CD8-positive, alpha-beta T cell (primary cell): ENCODE measurements at regions of chr22 and their contacts with region 1.

Region 1: DNA sequence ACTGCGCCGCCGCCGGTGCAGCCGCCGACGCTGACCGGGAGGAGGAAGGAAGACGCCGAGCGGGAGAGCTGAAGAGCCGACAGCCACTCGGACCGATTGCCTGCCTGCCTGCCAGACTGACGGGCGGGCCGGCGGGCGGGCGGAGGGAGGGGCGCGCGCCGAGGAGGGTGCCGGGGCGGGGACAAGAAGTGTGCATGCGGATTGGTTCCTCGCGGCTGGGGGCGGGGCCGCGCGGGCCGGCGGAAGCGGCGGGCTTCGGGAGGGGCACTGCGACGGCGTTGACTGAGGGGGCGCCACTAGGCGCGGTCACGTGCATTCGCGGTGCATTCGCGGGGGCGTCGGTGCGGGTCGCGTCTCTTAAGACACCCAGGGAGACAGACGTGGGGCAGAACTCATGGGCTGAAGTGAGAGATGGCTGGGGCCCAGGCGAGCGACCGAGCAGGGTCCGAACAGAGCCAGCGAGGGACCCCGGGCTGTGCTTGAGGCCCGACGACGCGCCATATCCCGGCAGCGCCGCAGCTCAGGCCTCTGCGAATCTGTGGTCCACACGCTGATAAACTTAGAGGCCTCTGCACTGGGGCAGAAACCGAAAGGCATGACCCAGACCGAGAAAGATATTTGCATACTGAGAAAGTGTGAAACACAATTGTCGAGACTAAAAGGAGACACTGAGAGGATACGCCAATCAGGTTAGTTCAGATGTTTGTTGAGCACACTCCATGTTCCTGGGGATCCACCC is at the start of gene MAPK1:
- DNase-seq: peak; percentile 87 to 97 (median 94)
- ATAC-seq: peak; percentile 96
- H3K4me3 ChIP-seq: peak within 1 kb of the TSS; percentile 92 to 93
- H3K4me3 Mint-ChIP-seq: peak within 1 kb of the TSS; percentile 97
- H3K27ac ChIP-seq: peak within 1 kb of the TSS; percentile 86 to 96
- H3K27ac Mint-ChIP-seq: peak within 1 kb of the TSS; percentile 97
- H3K4me1 ChIP-seq: peaks cover 38% of the 10 kb centered on the region
- H3K4me1 Mint-ChIP-seq: peaks cover 51% of the 10 kb centered on the region
- H3K27me3 ChIP-seq: no peaks in the 10 kb centered on the region
- H3K27me3 Mint-ChIP-seq: no peaks in the 10 kb centered on the region
- CTCF ChIP-seq: peak; percentile 47
- total RNA-seq, gene MAPK1: 34.0 to 39.2 TPM

Region 2: GRCh38 chr22:21629262-21630149 is 238.2 kb before region 1 on chr22 and contains the start of gene YDJC:
- CTCF ChIA-PET with region 1: no interaction called
- POLR2A ChIA-PET with region 1: no interaction called
- intact Hi-C with region 1: loop called (anchors 1 to 2 kb)
- DNase-seq: peak; percentile 91 to 97 (median 95)
- ATAC-seq: peak; percentile 84
- H3K4me3 ChIP-seq: peak within 1 kb of the TSS; percentile 92 to 99
- H3K4me3 Mint-ChIP-seq: peak within 1 kb of the TSS; percentile 93
- H3K27ac ChIP-seq: peak within 1 kb of the TSS; percentile 89 to 91
- H3K27ac Mint-ChIP-seq: peak within 1 kb of the TSS; percentile 90
- H3K4me1 ChIP-seq: peaks cover 42% of the 10 kb centered on the region
- H3K4me1 Mint-ChIP-seq: peaks cover 37% of the 10 kb centered on the region
- H3K27me3 ChIP-seq: no peaks in the 10 kb centered on the region
- H3K27me3 Mint-ChIP-seq: no peaks in the 10 kb centered on the region
- CTCF ChIP-seq: peak; percentile 95
- total RNA-seq, gene YDJC: 25.6 to 26.0 TPM

Region 3: DNA sequence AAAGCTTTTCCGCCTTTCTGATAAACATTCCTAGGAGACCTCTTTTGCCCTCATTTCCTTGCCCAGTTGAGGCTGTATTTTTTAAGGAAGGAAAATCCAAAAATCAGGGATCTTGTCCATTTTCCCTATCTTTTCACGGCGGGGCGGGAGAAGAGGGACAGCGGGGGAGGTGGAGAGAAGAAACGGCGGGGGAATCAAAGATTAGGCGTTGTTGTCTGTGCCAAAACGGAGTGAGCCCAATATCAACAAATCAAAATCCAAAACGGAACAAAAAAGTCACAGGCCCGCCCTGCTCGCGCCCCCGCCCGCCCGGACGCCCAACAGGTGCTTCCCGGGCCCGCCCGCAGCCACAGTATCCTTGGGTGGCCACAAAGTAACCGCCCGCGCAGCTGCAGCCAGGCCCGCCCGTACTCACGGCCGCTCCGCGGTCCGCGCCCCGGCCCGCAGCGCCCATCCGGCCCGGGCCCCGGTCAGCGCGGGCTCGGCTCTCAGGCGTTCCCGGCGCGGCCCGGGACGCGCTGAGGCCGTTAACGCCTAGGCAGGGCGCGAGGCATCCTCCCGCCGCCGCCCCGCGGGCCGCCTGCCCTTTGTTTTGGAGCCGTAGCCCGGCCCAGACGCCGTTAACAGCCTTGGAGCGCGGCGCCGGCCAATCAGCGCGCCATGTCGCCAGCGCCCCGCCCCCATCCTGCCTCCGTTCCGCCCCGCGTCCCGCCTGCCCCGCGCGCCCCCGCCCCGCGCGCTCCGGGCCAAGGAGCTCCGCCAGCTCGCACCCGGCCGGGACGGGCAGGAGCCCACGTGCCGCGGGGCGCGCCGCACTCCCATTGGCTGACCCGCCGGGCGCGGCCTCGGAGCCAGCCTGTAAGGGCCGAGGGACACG is 132.3 kb before region 1 on chr22 and contains the start of gene YPEL1:
- CTCF ChIA-PET with region 1: no interaction called
- POLR2A ChIA-PET with region 1: interaction called, 4 read pairs
- intact Hi-C with region 1: loop called (anchors 1 kb)
- DNase-seq: peak; percentile 92 to 98 (median 96)
- ATAC-seq: peak; percentile 91
- H3K4me3 ChIP-seq: peak within 1 kb of the TSS; percentile 59 to 78
- H3K4me3 Mint-ChIP-seq: peak within 1 kb of the TSS; percentile 91
- H3K27ac ChIP-seq: peak within 1 kb of the TSS; percentile 41 to 75
- H3K27ac Mint-ChIP-seq: peak within 1 kb of the TSS; percentile 88
- H3K4me1 ChIP-seq: peaks cover 12% of the 10 kb centered on the region
- H3K4me1 Mint-ChIP-seq: peaks cover 23% of the 10 kb centered on the region
- H3K27me3 ChIP-seq: no peaks in the 10 kb centered on the region
- H3K27me3 Mint-ChIP-seq: no peaks in the 10 kb centered on the region
- CTCF ChIP-seq: no peak
- total RNA-seq, gene YPEL1: 3.2 to 3.3 TPM

Region 4: GRCh38 chr22:21816787-21817496 is 50.8 kb before region 1 on chr22:
- CTCF ChIA-PET with region 1: interaction called, 3 read pairs
- POLR2A ChIA-PET with region 1: interaction called, 3 read pairs
- intact Hi-C with region 1: loop called (anchors 1 kb)
- DNase-seq: peak in 5 of 9 experiments; percentile 27 to 91 (median 35)
- ATAC-seq: peak; percentile 92
- H3K4me3 ChIP-seq: no peak overlapping the region
- H3K4me3 Mint-ChIP-seq: peak overlapping the region; percentile 74
- H3K27ac ChIP-seq: peak overlapping the region; percentile 60 to 91
- H3K27ac Mint-ChIP-seq: peak overlapping the region; percentile 97
- H3K4me1 ChIP-seq: peaks cover 41% of the 10 kb centered on the region
- H3K4me1 Mint-ChIP-seq: peaks cover 72% of the 10 kb centered on the region
- H3K27me3 ChIP-seq: no peaks in the 10 kb centered on the region
- H3K27me3 Mint-ChIP-seq: no peaks in the 10 kb centered on the region
- CTCF ChIP-seq: no peak

Region 5: GRCh38 chr22:21857481-21857914 is 10.2 kb before region 1 on chr22:
- CTCF ChIA-PET with region 1: no interaction called
- POLR2A ChIA-PET with region 1: interaction called, 5 read pairs
- intact Hi-C with region 1: loop called in 1 of 2 experiments (anchors 1 kb)
- DNase-seq: no peak
- ATAC-seq: no peak
- H3K4me3 ChIP-seq: no peak overlapping the region
- H3K4me3 Mint-ChIP-seq: no peak overlapping the region
- H3K27ac ChIP-seq: no peak overlapping the region
- H3K27ac Mint-ChIP-seq: peak overlapping the region; percentile 30
- H3K4me1 ChIP-seq: peaks cover 52% of the 10 kb centered on the region
- H3K4me1 Mint-ChIP-seq: peaks cover 87% of the 10 kb centered on the region
- H3K27me3 ChIP-seq: no peaks in the 10 kb centered on the region
- H3K27me3 Mint-ChIP-seq: no peaks in the 10 kb centered on the region
- CTCF ChIP-seq: no peak

Region 6: DNA sequence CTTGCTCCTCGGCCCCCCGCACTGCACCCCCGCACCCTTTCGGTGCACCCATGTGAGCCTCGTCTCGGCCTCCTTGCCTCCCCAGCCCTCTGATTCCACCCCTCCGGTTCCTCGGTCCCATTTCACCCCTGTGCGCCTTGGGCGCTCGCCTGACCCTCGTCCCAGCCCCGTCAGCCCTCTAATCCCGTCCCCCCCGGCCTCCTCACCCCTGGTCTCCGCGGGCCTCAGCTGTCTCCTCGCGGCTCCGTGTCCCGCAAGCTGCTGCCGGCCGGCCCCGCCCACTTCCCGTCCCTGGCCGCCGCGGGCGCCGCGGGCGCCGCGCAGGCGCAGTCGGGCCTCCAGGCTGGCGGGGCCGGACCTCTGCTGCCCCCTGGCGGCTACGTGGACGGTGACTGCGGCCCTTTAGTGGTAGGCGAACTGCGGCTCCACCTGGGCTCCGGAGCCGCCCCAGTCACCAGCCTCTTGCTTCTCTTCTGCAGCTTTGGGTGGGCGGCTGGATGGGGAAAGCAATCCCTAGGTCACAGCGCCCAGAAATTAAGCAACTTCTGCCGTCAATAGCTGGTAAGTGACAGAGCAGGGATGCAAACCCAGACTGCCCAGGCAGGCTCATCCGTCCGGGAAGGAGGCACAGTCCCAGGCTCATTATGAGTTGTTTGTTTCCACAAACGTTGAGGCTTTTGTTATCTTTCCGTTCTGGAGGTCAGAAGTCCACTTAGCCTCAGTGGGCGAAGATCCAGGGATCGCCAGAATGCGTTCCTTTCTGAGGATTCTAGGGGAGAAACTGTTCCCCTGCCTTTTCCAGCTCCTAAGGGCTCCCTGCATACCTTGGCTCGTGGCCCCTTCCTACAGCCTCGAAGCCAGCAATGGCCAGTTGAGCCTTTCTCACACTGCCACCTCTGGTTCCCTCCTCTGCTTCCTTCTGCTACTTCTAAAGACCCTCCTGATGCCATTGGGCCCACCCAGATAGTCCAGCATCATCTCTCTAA is 85.2 kb after region 1 on chr22 and contains the start of gene PPM1F:
- CTCF ChIA-PET with region 1: no interaction called
- POLR2A ChIA-PET with region 1: no interaction called
- intact Hi-C with region 1: loop called (anchors 5 kb)
- DNase-seq: peak; percentile 86 to 97 (median 92)
- ATAC-seq: peak; percentile 91
- H3K4me3 ChIP-seq: peak within 1 kb of the TSS; percentile 73 to 78
- H3K4me3 Mint-ChIP-seq: peak within 1 kb of the TSS; percentile 88
- H3K27ac ChIP-seq: peak within 1 kb of the TSS in 1 of 2 experiments; percentile 44
- H3K27ac Mint-ChIP-seq: no peak within 1 kb of the TSS
- H3K4me1 ChIP-seq: peaks cover 11% of the 10 kb centered on the region
- H3K4me1 Mint-ChIP-seq: peaks cover 23% of the 10 kb centered on the region
- H3K27me3 ChIP-seq: no peaks in the 10 kb centered on the region
- H3K27me3 Mint-ChIP-seq: no peaks in the 10 kb centered on the region
- CTCF ChIP-seq: peak; percentile 82
- total RNA-seq, gene PPM1F: 12.7 to 13.5 TPM